Sciatic nerve (tissue), 2 donors: ENCODE measurements at regions of chr5 and their contacts with region 1.

Region 1: DNA sequence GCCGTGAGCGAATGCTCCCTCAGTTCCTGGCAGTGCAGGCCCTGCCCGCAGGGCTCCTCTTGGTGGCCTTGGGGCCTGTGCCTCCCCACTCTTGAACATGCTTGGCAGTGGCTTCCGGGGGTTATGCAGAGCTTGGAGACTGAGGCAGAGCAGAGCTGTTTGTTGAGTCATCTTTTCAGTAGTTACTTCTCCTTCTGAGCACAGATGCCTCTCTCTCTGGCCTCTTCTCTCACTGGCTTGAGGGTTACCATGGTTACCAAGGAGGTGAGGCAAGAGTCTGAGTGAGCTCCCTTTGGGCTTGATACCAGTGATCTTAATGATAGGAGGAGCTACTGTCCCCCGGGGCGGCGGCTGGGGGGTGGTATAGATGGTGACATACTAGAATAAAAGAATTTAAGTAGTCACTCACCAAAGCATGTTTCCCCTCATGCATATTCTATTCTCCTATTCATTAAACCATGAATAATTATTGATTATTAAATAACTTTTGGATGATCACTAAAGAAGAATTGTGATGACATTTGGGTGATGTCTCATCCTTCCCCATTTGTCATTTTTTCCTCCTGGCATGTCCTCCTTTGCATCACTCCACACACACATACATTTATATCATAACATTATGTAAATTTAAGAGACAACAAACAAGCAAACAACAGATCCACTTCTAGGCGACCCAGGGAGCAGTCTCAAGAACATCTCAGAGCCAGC is 111.1 kb downstream of the ARHGAP26 start:
- DNase-seq: no peak
- ATAC-seq: peak; percentile 55

Region 2: GRCh38 chr5:142453932-142454331 is 427.3 kb before region 1 on chr5:
- intact Hi-C with region 1: no loop called
- DNase-seq: no peak
- ATAC-seq: no peak

Region 3: DNA sequence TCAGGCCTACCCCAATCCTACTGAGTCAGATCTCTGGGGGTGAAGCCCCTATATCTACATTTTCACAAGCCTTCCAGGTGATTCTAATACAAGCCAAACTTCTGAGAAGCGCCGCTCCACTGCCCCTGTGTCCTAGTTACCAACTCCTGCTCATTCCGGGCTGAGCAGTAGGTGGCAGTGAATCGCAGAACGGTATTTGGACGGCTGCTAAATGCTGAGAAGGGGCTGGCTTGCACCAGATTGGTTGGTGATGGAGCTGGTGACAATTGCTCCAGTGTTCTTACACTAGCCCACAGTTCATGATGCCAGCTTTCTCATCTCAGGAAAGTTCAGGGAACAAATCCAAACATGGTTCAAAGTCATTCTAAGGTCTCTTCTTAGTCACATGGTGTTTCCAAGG is 164.3 kb before region 1 on chr5:
- intact Hi-C with region 1: loop called (anchors 5 kb)
- DNase-seq: no peak
- ATAC-seq: peak; percentile 76

Region 4: DNA sequence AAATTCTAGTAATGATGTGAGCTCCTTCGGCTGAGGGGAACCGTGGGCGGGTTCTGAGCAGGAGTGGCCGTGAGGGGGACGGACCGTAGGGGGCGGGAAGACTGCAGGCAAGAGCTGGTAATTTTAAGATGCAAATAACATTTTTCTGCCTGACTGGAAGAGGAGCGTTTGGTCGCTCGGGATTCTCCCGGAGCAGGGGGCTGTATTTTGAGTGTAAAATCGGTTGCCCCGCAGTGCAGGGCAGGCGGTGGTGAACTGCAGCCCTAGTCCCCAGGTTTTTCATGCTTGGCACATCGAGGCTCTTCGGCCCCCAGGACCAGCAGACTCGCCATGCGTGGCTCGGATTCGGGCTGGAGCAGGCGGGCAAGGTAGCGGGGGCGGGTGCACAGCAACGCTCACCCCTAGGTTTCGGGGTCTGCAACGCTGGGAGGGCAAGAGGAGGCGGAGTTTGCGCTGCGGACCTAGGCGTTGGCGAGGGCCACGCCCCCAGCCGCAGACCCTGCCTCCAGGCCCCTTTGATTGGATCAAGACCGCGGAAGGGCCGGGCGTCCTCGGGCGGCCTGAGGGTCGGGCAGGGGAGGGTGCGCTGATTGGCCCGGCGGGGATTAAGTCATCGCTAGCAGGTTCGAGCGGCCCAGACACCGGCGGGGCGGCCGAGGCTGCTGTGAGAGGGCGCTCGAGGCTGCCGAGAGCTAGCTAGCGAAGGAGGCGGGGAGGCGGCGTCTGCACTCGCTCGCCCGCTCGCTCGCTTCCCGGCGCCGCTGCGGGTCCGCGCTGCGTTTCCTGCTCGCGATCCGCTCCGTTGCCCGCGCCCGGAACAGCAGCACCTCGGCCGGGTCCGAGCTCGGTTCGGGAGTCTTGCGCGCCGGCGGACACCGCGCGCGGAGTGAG is 111.2 kb before region 1 on chr5 and contains the start of gene ARHGAP26:
- intact Hi-C with region 1: loop called (anchors 5 kb)
- DNase-seq: peak; percentile 98
- ATAC-seq: peak; percentile 99
- total RNA-seq, gene ARHGAP26: 71.6 TPM